Cardiac septum (tissue), 1 donor: ENCODE measurements at regions of chr6 and their contacts with region 1.

Region 1: GRCh38 chr6:68634726-68635411 is at the start of gene ADGRB3:
- DNase-seq: peak; percentile 82
- total RNA-seq, gene ADGRB3: 0.51 TPM

Region 2: DNA sequence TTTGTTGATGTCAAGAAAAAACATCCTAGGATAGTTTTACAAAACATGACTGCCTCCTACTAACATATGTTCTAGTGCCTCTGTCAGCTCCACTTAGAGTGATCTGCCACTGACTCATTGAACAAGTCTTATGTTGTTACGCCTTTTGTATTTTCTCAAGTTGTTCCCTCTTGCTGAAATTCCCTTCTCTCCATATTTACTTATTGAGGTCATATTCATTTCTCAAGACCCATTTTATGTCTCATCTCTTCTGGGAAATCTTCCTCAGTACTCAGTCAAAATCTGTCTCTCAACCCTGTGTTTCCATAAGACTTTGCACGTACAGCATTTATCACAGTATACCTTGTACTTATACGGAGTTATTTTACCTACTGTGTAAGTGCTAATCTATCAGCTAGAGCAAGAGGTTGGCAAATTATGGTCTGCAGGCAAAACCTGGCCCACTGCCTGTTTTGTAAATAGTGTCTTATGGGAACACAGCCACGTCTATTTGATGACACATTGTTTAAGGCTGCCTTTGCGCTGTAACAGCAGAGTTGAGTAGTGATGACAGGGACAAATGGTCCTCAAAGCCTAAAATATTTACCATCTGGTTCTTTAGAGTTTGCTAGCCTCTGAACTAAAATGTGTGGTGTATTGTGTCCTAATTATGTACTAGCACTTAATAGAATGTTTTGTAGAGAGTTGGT is 83.7 kb after region 1 on chr6:
- intact Hi-C with region 1: no loop called
- DNase-seq: no peak

Region 3: GRCh38 chr6:68778356-68779020 is 143.6 kb after region 1 on chr6:
- intact Hi-C with region 1: loop called (anchors 2 kb)
- DNase-seq: no peak

Region 4: GRCh38 chr6:68967549-68968300 is 332.9 kb after region 1 on chr6:
- intact Hi-C with region 1: loop called (anchors 10 kb)
- DNase-seq: no peak